Ovary (tissue), 10 donors: ENCODE measurements at regions of chr1 and their contacts with region 1.

Region 1: GRCh38 chr1:118081401-118081800 is 103.6 kb downstream of the SPAG17 start:
- DNase-seq: no peak
- H3K4me3 ChIP-seq: no peak overlapping the region
- H3K27ac ChIP-seq: no peak overlapping the region
- H3K4me1 ChIP-seq: no peaks in the 10 kb centered on the region
- H3K27me3 ChIP-seq: no peaks in the 10 kb centered on the region
- CTCF ChIP-seq: no peak
- EP300 ChIP-seq: no peak
- POLR2A ChIP-seq: no peak

Region 2: DNA sequence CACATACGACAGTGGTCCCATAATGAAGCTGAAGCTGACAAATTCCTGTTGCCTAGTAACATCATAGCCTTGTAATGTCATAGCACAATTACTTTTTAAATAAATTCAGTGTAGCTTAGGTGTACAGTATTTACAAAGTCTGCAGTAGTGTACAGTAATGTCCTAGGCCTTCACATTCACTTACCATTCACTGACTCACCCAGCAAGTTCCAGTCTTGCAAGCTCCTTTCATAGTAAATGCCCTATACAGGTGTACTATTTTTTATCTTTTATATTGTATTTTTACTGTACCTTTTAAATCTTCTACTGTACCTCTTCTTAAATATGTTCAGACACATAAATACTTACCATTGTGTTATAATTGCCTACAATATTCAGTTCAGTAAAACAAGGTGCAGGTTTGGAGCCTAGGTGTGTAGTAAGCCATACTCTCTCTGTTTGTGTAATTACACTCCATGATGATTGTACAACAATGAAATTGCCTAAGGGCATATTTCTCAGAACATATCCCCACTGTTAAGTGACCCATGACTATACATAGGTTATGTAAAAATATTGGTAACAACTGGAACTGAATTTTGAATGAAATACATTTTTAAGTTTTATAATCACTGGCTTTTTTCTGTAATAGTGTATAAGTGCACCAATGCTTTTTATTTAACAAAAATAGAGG is 1848.4 kb after region 1 on chr1:
- intact Hi-C with region 1: loop called in 1 of 4 experiments (anchors 10 kb)
- DNase-seq: no peak
- H3K4me3 ChIP-seq: no peak overlapping the region
- H3K27ac ChIP-seq: no peak overlapping the region
- H3K4me1 ChIP-seq: no peaks in the 10 kb centered on the region
- H3K27me3 ChIP-seq: no peaks in the 10 kb centered on the region
- CTCF ChIP-seq: no peak
- EP300 ChIP-seq: no peak
- POLR2A ChIP-seq: no peak